Thyroid gland (tissue), 4 donors: ENCODE measurements at regions of chr4 and their contacts with region 1.

Region 1: GRCh38 chr4:169269916-169270809 is 593 bp downstream of the SH3RF1 start:
- DNase-seq: peak; percentile 69 to 72
- H3K4me3 ChIP-seq: peak overlapping the region; percentile 50 to 96 (median 76)
- H3K27ac ChIP-seq: peak overlapping the region; percentile 87 to 98 (median 98)
- H3K4me1 ChIP-seq: peaks cover 27 to 31% of the 10 kb centered on the region in 2 donors
- H3K27me3 ChIP-seq: no peaks in the 10 kb centered on the region
- CTCF ChIP-seq: peak in 3 of 6 experiments; percentile 13 to 27 (median 14)
- POLR2A ChIP-seq: peak in 1 of 2 donors; percentile 13

Region 2: GRCh38 chr4:169133932-169134331 is 136.2 kb before region 1 on chr4:
- intact Hi-C with region 1: loop called (anchors 10 kb)
- DNase-seq: peak; percentile 74 to 80
- H3K4me3 ChIP-seq: no peak overlapping the region
- H3K27ac ChIP-seq: peak overlapping the region; percentile 86 to 98 (median 96)
- H3K4me1 ChIP-seq: peaks cover 54 to 71% of the 10 kb centered on the region in 2 donors
- H3K27me3 ChIP-seq: no peaks in the 10 kb centered on the region
- CTCF ChIP-seq: no peak
- POLR2A ChIP-seq: no peak

Region 3: GRCh38 chr4:169305651-169306050 is 35.5 kb after region 1 on chr4:
- intact Hi-C with region 1: no loop called
- DNase-seq: peak; percentile 12 to 26
- H3K4me3 ChIP-seq: no peak overlapping the region
- H3K27ac ChIP-seq: peak overlapping the region; percentile 36 to 56 (median 38)
- H3K4me1 ChIP-seq: peaks cover 0 to 10% of the 10 kb centered on the region in 2 donors
- H3K27me3 ChIP-seq: no peaks in the 10 kb centered on the region
- CTCF ChIP-seq: no peak
- POLR2A ChIP-seq: no peak

Region 4: GRCh38 chr4:170008371-170008770 is 738.2 kb after region 1 on chr4:
- intact Hi-C with region 1: no loop called
- DNase-seq: peak; percentile 5 to 20
- H3K4me3 ChIP-seq: no peak overlapping the region
- H3K27ac ChIP-seq: no peak overlapping the region
- H3K4me1 ChIP-seq: no peaks in the 10 kb centered on the region
- H3K27me3 ChIP-seq: no peaks in the 10 kb centered on the region
- CTCF ChIP-seq: no peak
- POLR2A ChIP-seq: no peak